ENCODE measurements at regions of chr18 and their contacts with region 1.

Region 1: DNA sequence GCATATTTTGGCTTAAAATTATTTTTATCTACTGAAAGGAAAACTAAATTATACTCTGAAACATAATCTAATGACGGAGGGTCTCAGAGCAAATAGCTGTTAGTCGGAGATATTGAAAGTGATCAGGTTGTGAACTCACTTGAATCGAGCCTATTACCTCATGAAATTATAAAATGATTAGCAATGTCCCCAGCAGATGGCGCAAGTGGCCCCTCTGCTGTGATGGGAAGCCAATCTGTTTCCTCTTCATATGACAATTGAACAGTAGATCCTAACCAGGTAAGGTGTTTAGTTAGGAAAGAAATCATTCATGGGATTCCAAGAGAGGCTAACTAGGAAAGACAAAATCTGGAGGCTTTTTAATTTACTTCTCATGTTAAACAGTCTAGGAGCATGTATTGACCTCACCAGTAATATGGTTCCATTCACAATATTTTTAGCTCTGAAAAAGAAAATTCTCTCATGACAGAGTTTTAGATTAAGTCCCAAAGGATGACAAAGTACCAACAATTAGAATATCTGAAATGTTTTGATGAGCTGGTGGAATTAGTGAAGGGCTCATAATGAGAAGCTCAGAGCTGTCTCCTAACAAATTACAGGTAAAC is 29.9 kb upstream of the MPPE1 start:
- DNase-seq: peak; percentile 84
- H3K4me3 Mint-ChIP-seq: no peak overlapping the region
- H3K27ac Mint-ChIP-seq: no peak overlapping the region
- H3K4me1 Mint-ChIP-seq: no peaks in the 10 kb centered on the region
- H3K27me3 Mint-ChIP-seq: peaks cover 2% of the 10 kb centered on the region

Region 2: DNA sequence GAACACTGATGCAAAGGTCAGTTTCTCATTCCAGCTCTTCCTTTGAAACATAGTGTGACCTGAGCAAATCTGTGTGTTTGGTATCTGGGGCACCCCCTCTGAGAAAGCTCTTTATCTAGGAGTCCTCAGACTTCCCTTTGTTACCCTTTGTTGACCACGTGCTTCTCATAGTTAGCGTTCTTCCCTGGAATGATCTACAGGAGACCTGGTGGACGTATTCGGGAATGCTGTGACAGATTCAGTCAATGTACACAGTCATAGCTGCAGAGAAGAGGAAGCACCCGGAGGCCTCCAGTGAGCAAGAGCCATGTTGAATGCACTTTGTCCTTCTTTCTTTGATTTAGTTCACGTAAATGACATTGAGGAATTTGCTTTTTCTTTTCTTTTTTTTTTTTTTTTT is 97.5 kb before region 1 on chr18:
- CTCF ChIA-PET with region 1: no interaction called
- POLR2A ChIA-PET with region 1: no interaction called
- DNase-seq: no peak
- H3K4me3 Mint-ChIP-seq: no peak overlapping the region
- H3K27ac Mint-ChIP-seq: no peak overlapping the region
- H3K4me1 Mint-ChIP-seq: no peaks in the 10 kb centered on the region
- H3K27me3 Mint-ChIP-seq: no peaks in the 10 kb centered on the region

Region 3: DNA sequence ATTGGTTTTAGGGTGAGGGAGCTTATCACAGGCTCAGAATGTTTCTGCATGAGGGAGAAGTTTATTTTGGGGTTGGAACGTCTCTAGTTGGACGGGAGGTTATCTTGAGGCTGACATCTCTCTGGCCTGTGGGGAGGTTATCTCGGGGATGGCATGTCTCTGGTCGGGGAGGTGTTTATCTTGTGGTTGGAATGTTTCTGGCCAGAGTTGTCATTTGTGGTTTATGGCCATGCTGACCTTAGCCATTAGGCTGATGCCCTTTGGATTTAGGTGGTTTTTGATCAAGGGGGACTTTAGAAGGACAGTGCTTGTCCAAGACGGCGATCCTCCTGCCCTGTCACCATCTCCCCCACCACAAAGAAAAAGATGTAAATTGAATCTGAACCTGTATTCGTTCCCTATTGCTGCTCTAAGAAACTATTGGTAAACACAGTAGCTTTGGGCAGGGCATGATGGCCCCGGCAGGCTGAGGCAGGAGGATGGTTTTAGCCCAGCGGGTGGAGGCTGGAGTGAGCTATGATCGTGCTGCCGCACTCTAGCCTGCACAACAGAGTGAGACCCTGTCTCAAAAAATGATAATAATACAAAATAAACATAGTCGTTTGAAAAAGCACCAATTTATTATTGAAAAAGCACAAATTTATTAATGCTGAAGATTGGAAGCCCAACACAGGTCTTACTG is 12.0 kb before region 1 on chr18:
- CTCF ChIA-PET with region 1: interaction called, 26 read pairs
- POLR2A ChIA-PET with region 1: no interaction called
- DNase-seq: no peak
- H3K4me3 Mint-ChIP-seq: no peak overlapping the region
- H3K27ac Mint-ChIP-seq: no peak overlapping the region
- H3K4me1 Mint-ChIP-seq: peaks cover 4% of the 10 kb centered on the region
- H3K27me3 Mint-ChIP-seq: no peaks in the 10 kb centered on the region

Region 4: DNA sequence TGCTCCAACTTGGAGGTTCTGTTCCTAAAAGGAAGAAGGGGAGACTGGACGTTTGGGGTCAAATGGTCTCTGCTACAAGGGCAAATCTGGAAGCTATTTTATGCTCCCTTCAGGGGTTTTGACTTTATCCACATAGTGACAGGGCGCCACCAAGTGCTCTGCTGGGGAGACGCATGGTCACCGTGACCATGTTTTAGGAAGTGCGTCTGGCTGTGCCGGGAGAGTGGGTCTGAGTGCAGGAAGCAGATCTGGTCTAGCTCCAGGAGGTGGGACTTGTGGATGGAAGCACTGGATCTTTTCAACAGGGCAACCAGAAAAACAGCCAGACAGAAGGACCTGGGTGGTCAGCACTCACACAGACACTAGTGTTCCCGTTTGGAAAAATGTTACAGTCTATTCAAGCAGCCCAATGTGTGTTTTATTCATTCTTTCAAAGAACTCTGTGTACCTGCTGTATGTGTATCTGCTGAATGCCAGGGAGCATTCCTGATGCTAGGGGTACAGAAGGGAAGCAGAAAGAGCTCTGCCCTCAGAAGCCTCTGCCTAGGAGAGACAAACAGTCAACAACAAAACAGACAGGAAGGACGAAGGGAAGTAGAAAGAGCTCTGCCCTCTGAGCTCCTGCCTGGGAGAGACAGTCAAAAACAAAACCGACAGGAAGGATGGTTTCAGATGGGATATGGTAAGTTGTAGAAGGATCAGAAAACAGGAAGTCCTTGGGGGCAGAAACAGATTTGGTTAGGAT is 57.6 kb after region 1 on chr18:
- CTCF ChIA-PET with region 1: interaction called, 59 read pairs
- POLR2A ChIA-PET with region 1: no interaction called
- DNase-seq: peak; percentile 63
- H3K4me3 Mint-ChIP-seq: peak overlapping the region; percentile 35
- H3K27ac Mint-ChIP-seq: peak overlapping the region; percentile 83
- H3K4me1 Mint-ChIP-seq: peaks cover 23% of the 10 kb centered on the region
- H3K27me3 Mint-ChIP-seq: no peaks in the 10 kb centered on the region

Region 5: DNA sequence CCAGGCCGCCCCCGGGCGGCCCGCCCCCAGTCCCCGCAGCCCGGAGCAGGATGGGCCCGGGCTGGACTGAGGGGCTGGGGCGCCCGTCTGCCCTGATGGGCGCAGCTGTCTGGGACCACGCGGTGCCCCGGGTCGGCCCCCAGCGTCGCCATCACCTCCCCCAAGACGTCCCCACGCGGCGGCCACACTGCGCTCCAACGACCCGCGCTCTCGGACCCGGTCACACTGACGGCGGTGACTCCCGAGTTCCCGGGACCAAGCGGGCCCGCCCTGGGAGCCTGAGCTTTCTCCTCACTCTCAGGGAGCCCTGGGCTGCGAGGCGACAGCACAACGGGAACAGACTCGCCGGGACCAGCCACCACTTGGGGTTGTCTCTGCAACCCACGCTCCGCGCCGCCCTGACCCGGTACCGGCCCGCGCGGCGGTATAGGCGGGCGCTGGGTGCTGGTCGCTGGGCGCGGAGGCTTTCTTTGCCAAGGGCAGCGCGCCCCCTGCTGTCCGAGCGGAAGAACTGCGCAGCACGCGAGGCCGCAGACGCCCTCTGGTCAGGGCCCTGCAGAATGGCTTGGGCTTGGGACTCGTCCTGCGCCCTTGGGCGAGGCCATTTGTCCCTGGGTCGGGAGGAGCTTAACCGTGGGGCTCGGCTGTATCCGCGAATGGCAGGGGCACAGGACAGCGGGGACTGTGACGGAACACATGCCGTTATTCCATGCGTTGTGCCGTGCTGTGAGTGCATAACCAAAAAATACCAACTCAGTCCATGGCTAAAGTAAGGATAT is 100.9 kb after region 1 on chr18:
- CTCF ChIA-PET with region 1: interaction called, 24 read pairs
- POLR2A ChIA-PET with region 1: no interaction called
- DNase-seq: peak; percentile 73
- H3K4me3 Mint-ChIP-seq: peak overlapping the region; percentile 44
- H3K27ac Mint-ChIP-seq: no peak overlapping the region
- H3K4me1 Mint-ChIP-seq: peaks cover 6% of the 10 kb centered on the region
- H3K27me3 Mint-ChIP-seq: peaks cover 5% of the 10 kb centered on the region